ENCODE measurements at regions of chr1 and their contacts with region 1.

Region 1: GRCh38 chr1:159161001-159161718 is 10.3 kb upstream of the CADM3 start:
- DNase-seq: peak; percentile 55 to 92 (median 82)

Region 2: GRCh38 chr1:159197561-159198557 is 36.7 kb after region 1 on chr1:
- intact Hi-C with region 1: loop called (anchors 5 kb)
- DNase-seq: peak; percentile 45 to 91 (median 82)

Region 3: GRCh38 chr1:159214149-159214760 is 53.1 kb after region 1 on chr1:
- intact Hi-C with region 1: loop called (anchors 5 kb)
- DNase-seq: peak; percentile 27 to 83 (median 62)